ENCODE measurements at regions of chr1 and their contacts with region 1.

Region 1: GRCh38 chr1:185177360-185177759 is 20.4 kb downstream of the SWT1 start:
- DNase-seq: no peak
- ATAC-seq: no peak
- H3K4me3 Mint-ChIP-seq: no peak overlapping the region
- H3K27ac Mint-ChIP-seq: no peak overlapping the region
- H3K4me1 Mint-ChIP-seq: no peaks in the 10 kb centered on the region
- H3K27me3 Mint-ChIP-seq: no peaks in the 10 kb centered on the region
- CTCF ChIP-seq: no peak

Region 2: GRCh38 chr1:183859831-183860230 is 1317.5 kb before region 1 on chr1:
- CTCF ChIA-PET with region 1: no interaction called
- POLR2A ChIA-PET with region 1: no interaction called
- intact Hi-C with region 1: no loop called
- DNase-seq: no peak
- ATAC-seq: no peak
- H3K4me3 Mint-ChIP-seq: no peak overlapping the region
- H3K27ac Mint-ChIP-seq: no peak overlapping the region
- H3K4me1 Mint-ChIP-seq: no peaks in the 10 kb centered on the region
- H3K27me3 Mint-ChIP-seq: peaks cover 4% of the 10 kb centered on the region
- CTCF ChIP-seq: no peak

Region 3: GRCh38 chr1:185229981-185230380 is 52.6 kb after region 1 on chr1:
- CTCF ChIA-PET with region 1: no interaction called
- POLR2A ChIA-PET with region 1: no interaction called
- intact Hi-C with region 1: no loop called
- DNase-seq: no peak
- ATAC-seq: no peak
- H3K4me3 Mint-ChIP-seq: no peak overlapping the region
- H3K27ac Mint-ChIP-seq: no peak overlapping the region
- H3K4me1 Mint-ChIP-seq: no peaks in the 10 kb centered on the region
- H3K27me3 Mint-ChIP-seq: no peaks in the 10 kb centered on the region
- CTCF ChIP-seq: no peak

Region 4: DNA sequence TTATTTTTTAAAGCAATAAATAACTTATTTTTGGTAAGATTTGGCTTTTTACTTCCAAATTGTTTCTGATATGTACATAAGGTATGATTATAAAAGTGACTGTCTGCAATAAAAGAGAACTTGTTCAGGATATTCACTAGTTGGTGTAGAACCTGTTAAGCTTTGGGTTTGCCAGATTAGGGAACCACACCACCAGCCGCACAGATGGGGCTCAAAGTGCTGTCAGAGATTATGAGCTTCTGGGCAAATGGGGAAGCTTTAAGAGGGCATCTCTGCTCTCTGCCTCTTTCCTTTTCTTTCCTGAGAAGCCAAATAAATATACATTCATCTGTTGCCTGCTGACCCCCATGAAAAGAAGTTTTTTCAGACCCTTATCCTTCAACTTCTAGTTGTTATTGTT is 114.3 kb after region 1 on chr1:
- CTCF ChIA-PET with region 1: no interaction called
- POLR2A ChIA-PET with region 1: interaction called, 10 read pairs
- intact Hi-C with region 1: no loop called
- DNase-seq: no peak
- ATAC-seq: peak; percentile 47
- H3K4me3 Mint-ChIP-seq: no peak overlapping the region
- H3K27ac Mint-ChIP-seq: peak overlapping the region; percentile 53
- H3K4me1 Mint-ChIP-seq: peaks cover 26% of the 10 kb centered on the region
- H3K27me3 Mint-ChIP-seq: no peaks in the 10 kb centered on the region
- CTCF ChIP-seq: no peak

Measured in activated B cell treated with CpG ODN at 0.5 μM for 24 hours (primary cell).